HepG2 (cell line): ENCODE measurements at regions of chr6 and their contacts with region 1.

Region 1: DNA sequence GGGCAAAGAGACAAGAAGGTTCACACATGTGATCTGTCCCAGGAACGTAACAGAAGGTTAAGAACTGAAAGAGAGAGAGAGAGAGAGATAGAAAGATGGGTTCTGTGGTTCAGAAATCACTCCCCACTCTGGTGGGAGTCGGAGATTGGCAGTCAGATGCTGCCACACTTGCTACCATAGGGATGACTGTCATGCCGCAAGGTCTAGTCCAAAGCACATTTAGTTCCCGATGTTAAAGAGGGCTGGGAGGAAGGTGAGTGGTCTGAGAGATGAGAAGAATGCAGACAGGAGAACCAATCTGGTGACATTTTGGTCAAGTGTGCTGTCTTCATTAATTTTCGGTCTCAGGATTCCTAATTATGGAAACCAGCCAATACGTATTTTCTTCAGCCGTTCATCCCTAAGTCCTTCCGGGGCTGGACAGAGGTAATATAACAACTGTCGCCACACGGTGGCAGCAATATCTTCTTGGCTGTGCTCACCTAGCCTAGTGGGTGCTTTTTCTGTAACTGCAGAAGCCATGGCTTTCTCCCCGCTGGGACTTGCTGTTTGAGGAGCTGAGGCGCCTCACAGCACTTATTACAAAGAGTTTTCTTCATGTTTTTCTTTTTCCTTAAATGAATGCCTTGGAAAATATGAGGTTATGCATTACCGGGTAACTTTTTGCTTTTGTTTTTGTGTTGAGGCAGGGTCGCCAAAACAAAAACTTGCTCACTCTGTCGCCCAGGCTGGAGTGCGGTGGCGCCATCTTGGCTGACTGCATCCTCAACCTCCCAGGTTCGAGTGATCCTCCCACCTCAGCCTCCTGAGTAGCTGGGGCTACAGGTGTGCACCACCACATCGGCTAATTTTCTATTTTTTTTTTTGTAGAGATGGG is 46.0 kb downstream of the SLC35D3 start:
- DNase-seq: peak; percentile 69
- ATAC-seq: peak; percentile 99
- H3K4me3 ChIP-seq: no peak overlapping the region
- H3K27ac ChIP-seq: no peak overlapping the region
- H3K4me1 ChIP-seq: no peaks in the 10 kb centered on the region
- H3K27me3 ChIP-seq: peaks cover 0 to 7% of the 10 kb centered on the region in 2 experiments; a peak in 1 of 5 replicates
- CTCF ChIP-seq: peak; percentile 83
- EP300 ChIP-seq: no peak
- POLR2A ChIP-seq: no peak
- RAD21 ChIP-seq: peak; percentile 62

Region 2: GRCh38 chr6:136983687-136984086 is 15.6 kb after region 1 on chr6:
- CTCF ChIA-PET with region 1: no interaction called
- POLR2A ChIA-PET with region 1: no interaction called
- in situ Hi-C with region 1: no loop called
- intact Hi-C with region 1: no loop called
- DNase-seq: no peak
- ATAC-seq: no peak
- H3K4me3 ChIP-seq: no peak overlapping the region
- H3K27ac ChIP-seq: no peak overlapping the region
- H3K4me1 ChIP-seq: no peaks in the 10 kb centered on the region
- H3K27me3 ChIP-seq: peaks cover 2 to 26% of the 10 kb centered on the region in 2 experiments; a peak in 4 of 5 replicates
- CTCF ChIP-seq: no peak
- EP300 ChIP-seq: no peak
- POLR2A ChIP-seq: no peak
- RAD21 ChIP-seq: no peak

Region 3: GRCh38 chr6:137013738-137014602 is 45.9 kb after region 1 on chr6:
- CTCF ChIA-PET with region 1: interaction called, 3 read pairs
- POLR2A ChIA-PET with region 1: no interaction called
- in situ Hi-C with region 1: no loop called
- intact Hi-C with region 1: loop called (anchors 1 kb)
- DNase-seq: peak; percentile 18
- ATAC-seq: peak; percentile 76
- H3K4me3 ChIP-seq: no peak overlapping the region
- H3K27ac ChIP-seq: no peak overlapping the region
- H3K4me1 ChIP-seq: no peaks in the 10 kb centered on the region
- H3K27me3 ChIP-seq: peaks cover 0 to 5% of the 10 kb centered on the region in 2 experiments; a peak in 1 of 5 replicates
- CTCF ChIP-seq: peak; percentile 46
- EP300 ChIP-seq: no peak
- POLR2A ChIP-seq: no peak
- RAD21 ChIP-seq: 0 out of 2 replicates have a peak, but pooled peaks have one; percentile 22

Region 4: GRCh38 chr6:137165375-137166246 is 197.5 kb after region 1 on chr6:
- CTCF ChIA-PET with region 1: no interaction called
- POLR2A ChIA-PET with region 1: no interaction called
- in situ Hi-C with region 1: no loop called
- intact Hi-C with region 1: loop called (anchors 1 kb)
- DNase-seq: peak; percentile 35
- ATAC-seq: peak; percentile 83
- H3K4me3 ChIP-seq: no peak overlapping the region
- H3K27ac ChIP-seq: no peak overlapping the region
- H3K4me1 ChIP-seq: no peaks in the 10 kb centered on the region
- H3K27me3 ChIP-seq: peaks cover 0 to 26% of the 10 kb centered on the region in 2 experiments; a peak in 4 of 5 replicates
- CTCF ChIP-seq: peak; percentile 67
- EP300 ChIP-seq: no peak
- POLR2A ChIP-seq: no peak
- RAD21 ChIP-seq: peak; percentile 51